Prostate gland (tissue), 2 donors: ENCODE measurements at regions of chr12 and their contacts with region 1.

Region 1: DNA sequence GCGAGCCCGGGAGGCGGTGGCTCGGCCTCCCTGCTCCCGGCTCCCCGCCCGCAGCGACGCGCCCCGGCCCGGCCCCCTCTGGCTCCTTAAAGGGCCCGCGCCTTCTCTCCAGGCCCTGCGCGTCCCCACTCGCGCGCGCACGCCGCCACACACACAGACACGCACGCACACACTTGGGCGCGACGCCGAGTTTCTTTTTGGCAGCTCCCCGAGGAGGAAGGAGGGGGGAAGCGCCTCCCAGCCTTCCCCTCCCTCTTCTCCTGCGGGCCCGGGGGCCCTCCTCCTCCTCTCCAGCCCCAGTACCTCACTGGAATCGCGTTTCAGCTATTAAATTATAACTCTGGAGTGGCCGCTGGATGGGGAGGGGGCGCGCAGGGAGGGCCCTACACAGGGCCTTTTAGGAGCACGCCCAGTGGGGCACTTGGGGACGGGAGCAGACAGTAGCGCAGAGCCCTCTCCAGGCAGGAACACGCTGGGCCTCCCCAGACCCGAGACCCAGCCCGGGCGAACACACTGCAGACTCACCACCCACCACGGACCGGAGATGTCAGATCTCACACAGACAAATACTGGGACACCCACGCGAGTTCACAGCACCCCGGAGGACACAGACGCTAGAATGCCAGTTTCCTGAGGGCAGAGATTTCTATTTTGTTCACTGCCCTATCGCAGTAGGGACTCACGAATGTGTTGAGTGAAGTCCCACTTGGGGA is 405 bp upstream of the NCOR2 start:
- DNase-seq: peak; percentile 95
- H3K4me3 ChIP-seq: peak overlapping the region; percentile 23 to 76
- H3K27ac ChIP-seq: peak overlapping the region; percentile 87 to 88
- H3K4me1 ChIP-seq: peaks cover 16% of the 10 kb centered on the region
- H3K27me3 ChIP-seq: no peaks in the 10 kb centered on the region
- CTCF ChIP-seq: peak in 2 of 4 experiments; percentile 14 to 42
- POLR2A ChIP-seq: peak; percentile 28

Region 2: DNA sequence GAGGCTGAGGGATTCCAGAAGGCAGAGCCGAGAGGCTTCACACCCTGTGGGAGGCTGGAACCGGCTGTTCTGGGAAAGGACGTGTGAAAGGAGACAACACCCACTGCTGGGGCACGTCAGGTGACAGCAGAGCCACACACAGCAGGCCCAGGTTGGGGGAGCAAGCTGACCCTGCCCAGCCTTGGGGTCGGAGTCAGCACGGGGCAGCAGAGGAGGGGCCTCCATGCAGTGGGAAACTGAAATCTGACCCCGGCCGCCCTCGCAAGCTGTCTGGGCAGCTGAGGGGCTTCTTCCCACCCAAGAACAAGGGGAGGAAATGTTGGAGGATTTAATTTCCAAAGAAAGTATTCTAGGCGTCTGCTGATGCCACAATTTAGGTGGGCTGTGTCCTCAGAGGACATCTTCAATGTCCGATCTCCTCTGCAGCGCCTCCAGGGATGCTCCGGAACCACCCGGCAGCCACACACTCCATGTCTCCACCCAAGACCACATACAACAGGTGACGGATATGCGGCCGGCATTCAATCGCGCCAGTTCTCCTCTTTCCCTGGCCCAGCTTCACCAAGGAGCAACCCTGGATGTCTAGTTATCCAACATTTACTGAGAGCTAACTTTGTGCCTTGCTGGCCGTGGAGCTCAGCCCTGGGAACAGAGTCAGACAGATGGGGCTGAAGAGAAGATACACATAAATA is 1079.1 kb before region 1 on chr12:
- intact Hi-C with region 1: no loop called
- DNase-seq: no peak
- H3K4me3 ChIP-seq: no peak overlapping the region
- H3K27ac ChIP-seq: no peak overlapping the region
- H3K4me1 ChIP-seq: no peaks in the 10 kb centered on the region
- H3K27me3 ChIP-seq: no peaks in the 10 kb centered on the region
- CTCF ChIP-seq: no peak
- POLR2A ChIP-seq: no peak

Region 3: GRCh38 chr12:124024263-124024678 is 543.5 kb before region 1 on chr12:
- intact Hi-C with region 1: no loop called
- DNase-seq: no peak
- H3K4me3 ChIP-seq: no peak overlapping the region
- H3K27ac ChIP-seq: no peak overlapping the region
- H3K4me1 ChIP-seq: no peaks in the 10 kb centered on the region
- H3K27me3 ChIP-seq: no peaks in the 10 kb centered on the region
- CTCF ChIP-seq: no peak
- POLR2A ChIP-seq: no peak

Region 4: DNA sequence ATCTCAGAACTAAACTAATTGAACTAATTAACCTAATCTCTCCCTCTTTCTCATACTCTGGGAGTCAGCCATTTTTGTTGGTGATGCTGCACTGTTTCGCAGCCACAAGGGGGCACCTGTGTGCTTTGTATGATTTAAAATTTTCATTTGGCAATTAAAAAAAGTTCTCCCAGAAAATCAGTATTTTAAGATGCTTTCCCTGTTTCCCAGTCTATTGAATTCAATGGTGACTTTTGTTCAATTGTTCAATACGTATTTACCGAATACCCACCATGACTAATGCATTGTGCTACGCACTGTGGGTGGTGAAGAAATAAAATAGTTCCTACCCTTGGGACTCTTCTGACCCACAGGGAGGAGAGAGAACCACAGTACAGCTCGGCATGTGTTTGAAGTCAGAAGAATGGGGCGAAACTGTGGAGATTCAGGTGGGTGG is 531.1 kb before region 1 on chr12:
- intact Hi-C with region 1: loop called (anchors 10 kb)
- DNase-seq: peak; percentile 37
- H3K4me3 ChIP-seq: no peak overlapping the region
- H3K27ac ChIP-seq: no peak overlapping the region
- H3K4me1 ChIP-seq: no peaks in the 10 kb centered on the region
- H3K27me3 ChIP-seq: no peaks in the 10 kb centered on the region
- CTCF ChIP-seq: peak; percentile 80 to 92 (median 88)
- POLR2A ChIP-seq: no peak

Region 5: DNA sequence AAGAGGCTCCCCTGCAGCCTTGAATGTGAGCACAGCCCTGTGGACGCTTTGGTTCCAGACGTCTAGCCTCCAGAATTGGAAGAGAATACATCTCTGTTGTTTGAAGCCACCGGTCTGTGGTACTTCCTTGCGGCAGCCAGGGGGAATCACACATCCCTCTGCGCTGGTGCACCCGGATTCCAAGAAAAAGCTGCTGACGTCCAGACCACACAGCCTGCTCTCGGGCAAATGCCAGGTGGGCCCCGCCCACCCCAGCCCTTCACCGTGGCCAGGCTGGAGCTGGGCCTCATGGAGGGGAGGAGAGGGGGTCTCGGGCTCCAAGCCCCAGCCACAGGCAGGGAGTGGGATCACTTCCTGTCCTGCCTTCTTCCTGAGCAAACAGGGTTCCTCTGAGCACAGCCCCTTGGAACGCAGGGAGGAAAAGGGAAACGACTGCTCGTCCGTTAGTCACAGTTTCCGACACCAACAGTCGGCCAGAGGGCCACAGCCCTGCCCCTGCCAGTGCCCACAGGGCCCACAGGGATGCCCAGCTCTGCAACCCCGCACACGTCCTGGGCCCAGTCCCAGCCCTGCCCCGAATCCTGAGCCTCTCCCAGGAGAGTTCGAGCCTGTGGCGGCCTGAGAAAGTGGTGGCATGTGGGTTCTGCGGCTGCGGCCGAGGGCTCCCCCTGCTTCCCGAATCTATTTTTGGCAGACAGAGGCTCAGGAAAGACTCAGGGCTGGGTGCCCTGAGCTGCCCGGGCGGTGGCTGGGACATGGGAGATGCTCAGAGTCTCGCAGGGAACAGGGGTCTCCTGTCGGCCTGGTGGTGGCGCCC is 187.7 kb before region 1 on chr12:
- intact Hi-C with region 1: loop called (anchors 5 kb)
- DNase-seq: peak; percentile 55
- H3K4me3 ChIP-seq: no peak overlapping the region
- H3K27ac ChIP-seq: peak overlapping the region; percentile 74 to 81
- H3K4me1 ChIP-seq: peaks cover 36% of the 10 kb centered on the region
- H3K27me3 ChIP-seq: no peaks in the 10 kb centered on the region
- CTCF ChIP-seq: peak in 3 of 4 experiments; percentile 37 to 69 (median 56)
- POLR2A ChIP-seq: no peak

Region 6: GRCh38 chr12:124518051-124518932 is 49.5 kb before region 1 on chr12:
- intact Hi-C with region 1: loop called (anchors 5 kb)
- DNase-seq: peak; percentile 99
- H3K4me3 ChIP-seq: peak overlapping the region; percentile 42 to 47
- H3K27ac ChIP-seq: peak overlapping the region; percentile 90 to 94
- H3K4me1 ChIP-seq: peaks cover 33% of the 10 kb centered on the region
- H3K27me3 ChIP-seq: no peaks in the 10 kb centered on the region
- CTCF ChIP-seq: no peak
- POLR2A ChIP-seq: no peak

Region 7: DNA sequence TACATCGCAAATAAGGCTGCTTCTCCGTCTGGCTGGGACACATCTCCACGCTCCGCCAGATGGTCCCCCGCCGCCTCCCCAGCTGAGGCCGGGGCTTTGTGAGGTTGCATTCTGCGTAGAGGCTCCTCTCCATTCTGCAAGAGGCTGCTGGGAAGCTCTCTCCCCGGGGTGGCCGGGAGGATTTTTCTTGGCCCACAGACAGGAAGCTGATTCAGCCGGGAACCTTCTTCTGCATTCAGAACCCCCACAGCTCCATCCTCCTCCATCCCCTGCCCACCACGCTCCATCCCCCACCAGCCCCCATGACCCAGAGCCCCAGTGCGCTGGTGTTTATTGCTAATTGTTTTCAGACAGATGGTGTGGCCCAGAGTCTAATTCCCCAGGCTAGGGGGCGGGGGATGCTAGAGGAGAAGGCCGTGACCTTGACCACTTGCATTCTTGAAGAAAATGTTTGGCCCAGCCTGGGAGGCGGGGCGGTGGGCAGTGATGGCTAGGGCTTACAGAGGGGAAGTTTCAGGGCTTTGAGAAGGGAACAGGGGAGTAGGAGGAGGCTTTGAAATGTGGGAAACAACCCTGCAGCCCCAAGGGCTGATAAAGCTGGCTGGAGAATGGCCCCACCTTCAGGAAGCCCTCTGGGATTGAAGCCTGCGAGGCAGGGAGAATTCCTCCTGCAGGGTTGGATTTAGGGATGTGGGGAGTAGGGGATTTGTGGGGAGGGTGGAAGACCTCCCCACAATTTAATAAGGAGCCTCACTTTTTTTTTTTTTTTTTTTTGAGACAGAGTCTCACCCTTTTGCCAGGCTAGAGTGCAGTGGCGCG is 88.1 kb after region 1 on chr12:
- intact Hi-C with region 1: no loop called
- DNase-seq: no peak
- H3K4me3 ChIP-seq: no peak overlapping the region
- H3K27ac ChIP-seq: peak overlapping the region; percentile 57 to 61
- H3K4me1 ChIP-seq: no peaks in the 10 kb centered on the region
- H3K27me3 ChIP-seq: no peaks in the 10 kb centered on the region
- CTCF ChIP-seq: no peak
- POLR2A ChIP-seq: no peak

Region 8: DNA sequence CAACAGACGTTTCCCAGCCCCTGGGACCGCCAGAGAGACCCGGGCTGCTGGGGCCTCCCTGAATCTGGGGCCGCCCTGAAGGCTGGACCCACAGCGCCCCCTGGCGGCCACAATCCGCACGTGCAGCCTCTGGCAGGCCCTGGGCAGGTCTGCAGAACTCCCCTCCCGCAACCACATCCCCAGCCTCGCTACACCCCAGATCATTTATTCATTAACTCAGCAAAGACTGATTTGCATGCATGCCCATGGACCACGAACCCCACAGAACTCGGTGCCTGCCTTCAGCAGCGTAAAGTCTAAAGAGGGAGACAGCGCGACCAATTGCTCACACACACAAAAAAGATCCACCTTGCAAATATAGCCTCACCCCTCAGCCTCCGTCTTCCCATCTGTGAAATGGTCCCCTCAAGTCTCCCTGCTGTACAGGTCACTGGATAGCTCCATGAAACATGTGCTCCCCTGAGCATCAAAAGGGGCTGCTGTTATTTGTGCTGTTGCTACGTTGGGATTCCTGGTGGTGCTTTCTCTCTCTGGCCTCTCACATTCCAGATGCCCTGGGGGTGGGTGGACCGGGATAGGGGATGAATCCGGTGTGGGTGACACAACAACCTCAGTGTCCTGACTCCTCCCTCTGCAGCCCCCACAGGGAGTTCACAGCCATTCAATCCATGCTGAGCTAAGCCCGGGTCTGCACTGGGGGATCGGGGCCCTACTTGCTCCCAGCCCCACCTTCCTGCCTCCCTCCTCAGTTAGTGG is 199.4 kb after region 1 on chr12:
- intact Hi-C with region 1: loop called (anchors 2 kb)
- DNase-seq: peak; percentile 61
- H3K4me3 ChIP-seq: no peak overlapping the region
- H3K27ac ChIP-seq: peak overlapping the region in 1 of 2 donors; percentile 2
- H3K4me1 ChIP-seq: no peaks in the 10 kb centered on the region
- H3K27me3 ChIP-seq: no peaks in the 10 kb centered on the region
- CTCF ChIP-seq: peak; percentile 98 to 100 (median 98)
- POLR2A ChIP-seq: no peak